CD8-positive, alpha-beta memory T cell (primary cell): ENCODE measurements at regions of chr17 and their contacts with region 1.

Region 1: DNA sequence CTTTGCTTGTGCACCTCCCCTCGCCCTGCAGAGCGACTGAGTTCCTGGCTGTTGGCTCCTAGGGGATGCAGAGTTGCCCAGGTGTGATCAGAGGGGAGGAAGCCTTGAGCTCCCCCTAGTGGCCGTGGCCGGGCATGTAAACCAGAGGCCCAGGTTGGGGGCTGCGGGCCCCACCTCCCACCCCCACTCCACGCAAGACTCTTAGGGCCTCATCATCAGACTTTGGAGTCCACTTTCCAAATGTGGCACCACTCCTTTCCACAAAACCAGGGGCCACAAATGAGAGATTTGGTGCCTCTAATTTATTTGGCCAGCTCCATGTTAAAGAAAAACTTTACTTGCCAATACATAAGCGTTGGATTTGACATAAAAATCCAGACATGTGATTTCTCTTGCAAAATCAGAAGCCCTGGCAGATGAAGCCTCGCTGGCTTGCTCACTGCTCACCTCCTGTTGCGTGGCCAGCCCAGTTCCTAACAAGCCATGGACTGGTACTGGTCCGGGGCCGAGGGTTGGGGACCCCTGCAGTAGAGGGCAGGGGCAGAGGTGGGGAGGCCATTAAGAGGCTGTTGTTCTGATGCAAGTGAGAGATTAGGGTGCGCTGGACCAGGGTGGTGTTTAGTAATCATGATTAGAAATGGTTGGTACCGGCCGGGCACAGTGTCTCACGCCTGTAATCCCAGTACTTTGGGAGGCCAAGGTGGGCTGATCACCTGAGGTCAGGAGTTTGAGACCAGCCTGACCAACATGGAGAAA is 28.7 kb upstream of the GAS7 start:
- DNase-seq: peak; percentile 16 to 67 (median 45)
- H3K4me3 ChIP-seq: no peak overlapping the region
- H3K4me3 Mint-ChIP-seq: no peak overlapping the region
- H3K27ac ChIP-seq: no peak overlapping the region
- H3K27ac Mint-ChIP-seq: no peak overlapping the region
- H3K4me1 ChIP-seq: no peaks in the 10 kb centered on the region
- H3K4me1 Mint-ChIP-seq: peaks cover 0 to 2% (median 0%) of the 10 kb centered on the region in 3 donors
- H3K27me3 ChIP-seq: no peaks in the 10 kb centered on the region
- H3K27me3 Mint-ChIP-seq: peaks cover 0 to 2% of the 10 kb centered on the region in 2 donors

Region 2: GRCh38 chr17:9987779-9988574 is 239.1 kb before region 1 on chr17:
- CTCF ChIA-PET with region 1: interaction called, 11 read pairs
- POLR2A ChIA-PET with region 1: no interaction called
- DNase-seq: peak in 4 of 5 donors; percentile 13 to 60 (median 18)
- H3K4me3 ChIP-seq: no peak overlapping the region
- H3K4me3 Mint-ChIP-seq: no peak overlapping the region
- H3K27ac ChIP-seq: no peak overlapping the region
- H3K27ac Mint-ChIP-seq: peak overlapping the region in 2 of 8 donors; percentile 56 to 83
- H3K4me1 ChIP-seq: no peaks in the 10 kb centered on the region
- H3K4me1 Mint-ChIP-seq: peaks cover 0 to 9% (median 0%) of the 10 kb centered on the region in 3 donors
- H3K27me3 ChIP-seq: no peaks in the 10 kb centered on the region
- H3K27me3 Mint-ChIP-seq: no peaks in the 10 kb centered on the region

Region 3: GRCh38 chr17:10156948-10157607 is 70.0 kb before region 1 on chr17:
- CTCF ChIA-PET with region 1: no interaction called
- POLR2A ChIA-PET with region 1: no interaction called
- DNase-seq: peak in 4 of 5 donors; percentile 3 to 53 (median 27)
- H3K4me3 ChIP-seq: no peak overlapping the region
- H3K4me3 Mint-ChIP-seq: peak overlapping the region in 4 of 7 donors; percentile 1 to 59 (median 44)
- H3K27ac ChIP-seq: no peak overlapping the region
- H3K27ac Mint-ChIP-seq: peak overlapping the region in 7 of 8 donors; percentile 1 to 84 (median 47)
- H3K4me1 ChIP-seq: peaks cover 12% of the 10 kb centered on the region
- H3K4me1 Mint-ChIP-seq: peaks cover 24 to 25% (median 25%) of the 10 kb centered on the region in 3 donors
- H3K27me3 ChIP-seq: no peaks in the 10 kb centered on the region
- H3K27me3 Mint-ChIP-seq: peaks cover 0 to 5% of the 10 kb centered on the region in 2 donors

Region 4: GRCh38 chr17:10243883-10244844 is 17.1 kb after region 1 on chr17:
- CTCF ChIA-PET with region 1: no interaction called
- POLR2A ChIA-PET with region 1: no interaction called
- DNase-seq: no peak
- H3K4me3 ChIP-seq: no peak overlapping the region
- H3K4me3 Mint-ChIP-seq: no peak overlapping the region
- H3K27ac ChIP-seq: no peak overlapping the region
- H3K27ac Mint-ChIP-seq: peak overlapping the region in 1 of 8 donors; percentile 67
- H3K4me1 ChIP-seq: no peaks in the 10 kb centered on the region
- H3K4me1 Mint-ChIP-seq: no peaks in the 10 kb centered on the region
- H3K27me3 ChIP-seq: no peaks in the 10 kb centered on the region
- H3K27me3 Mint-ChIP-seq: peaks cover 4 to 12% of the 10 kb centered on the region in 2 donors

Region 5: GRCh38 chr17:10349403-10349802 is 122.3 kb after region 1 on chr17:
- CTCF ChIA-PET with region 1: no interaction called
- POLR2A ChIA-PET with region 1: no interaction called
- DNase-seq: no peak
- H3K4me3 ChIP-seq: no peak overlapping the region
- H3K4me3 Mint-ChIP-seq: no peak overlapping the region
- H3K27ac ChIP-seq: no peak overlapping the region
- H3K27ac Mint-ChIP-seq: no peak overlapping the region
- H3K4me1 ChIP-seq: no peaks in the 10 kb centered on the region
- H3K4me1 Mint-ChIP-seq: no peaks in the 10 kb centered on the region
- H3K27me3 ChIP-seq: no peaks in the 10 kb centered on the region
- H3K27me3 Mint-ChIP-seq: peaks cover 0 to 2% of the 10 kb centered on the region in 2 donors